ENCODE measurements at regions of chr1 and their contacts with region 1.

Region 1: DNA sequence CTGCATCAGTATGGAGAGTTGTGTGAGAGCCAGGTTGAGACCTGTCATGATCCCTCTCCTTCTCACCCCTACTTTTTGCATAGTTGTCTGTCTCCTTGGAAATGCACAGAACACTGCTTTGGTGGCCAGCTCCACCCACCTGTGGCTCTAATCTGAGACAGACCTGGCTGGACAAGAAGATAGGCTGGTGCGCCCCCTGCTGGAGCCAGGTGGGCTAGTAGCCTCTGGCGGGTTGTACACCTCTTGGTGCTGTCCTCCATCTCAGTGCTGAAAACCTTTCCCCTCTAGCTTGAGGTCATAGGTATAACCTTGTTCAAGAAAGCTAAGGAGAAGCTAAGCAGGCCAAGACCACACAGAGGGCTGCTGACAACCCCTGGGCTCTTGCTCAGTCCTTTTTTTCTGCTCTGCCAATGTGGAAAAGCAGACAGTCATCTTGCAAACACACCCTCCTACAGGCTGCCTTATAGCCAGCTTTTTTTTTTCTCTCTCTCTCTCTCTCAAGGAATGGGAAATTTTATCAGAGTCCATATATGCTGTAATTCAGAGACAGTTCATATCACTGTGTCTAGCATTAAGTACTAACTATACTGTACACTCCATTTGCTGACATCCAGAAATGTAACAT is 58.8 kb upstream of the SPATA6 start:
- DNase-seq: peak in 9 of 10 donors; percentile 30 to 93 (median 56)

Region 2: DNA sequence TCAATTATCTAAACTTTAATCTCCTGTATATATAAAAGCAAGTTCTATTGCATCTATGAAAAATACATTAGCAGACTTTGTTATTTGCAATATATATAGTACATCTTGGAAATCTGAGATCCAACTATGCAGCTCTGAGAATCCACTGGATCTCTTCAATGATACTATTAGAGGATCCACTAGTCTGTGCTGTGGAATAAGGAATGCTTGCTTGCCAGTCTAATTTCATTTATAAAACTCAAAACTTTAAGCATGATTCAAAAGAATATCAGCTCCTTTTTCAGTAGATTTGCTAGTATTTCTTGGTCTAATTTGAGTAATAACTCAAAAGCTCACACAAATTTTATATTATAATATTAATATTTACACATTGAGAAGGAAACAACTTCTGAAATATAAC is 173.9 kb before region 1 on chr1:
- intact Hi-C with region 1: loop called (anchors 10 kb)
- DNase-seq: no peak